ENCODE measurements at regions of chr6 and their contacts with region 1.

Region 1: GRCh38 chr6:506508-506907 is 115.0 kb downstream of the IRF4 start:
- DNase-seq: peak; percentile 86
- ATAC-seq: peak; percentile 69
- H3K4me3 Mint-ChIP-seq: peak overlapping the region; percentile 50
- H3K27ac Mint-ChIP-seq: peak overlapping the region; percentile 99
- H3K4me1 Mint-ChIP-seq: peaks cover 97% of the 10 kb centered on the region
- H3K27me3 Mint-ChIP-seq: no peaks in the 10 kb centered on the region
- CTCF ChIP-seq: no peak

Region 2: DNA sequence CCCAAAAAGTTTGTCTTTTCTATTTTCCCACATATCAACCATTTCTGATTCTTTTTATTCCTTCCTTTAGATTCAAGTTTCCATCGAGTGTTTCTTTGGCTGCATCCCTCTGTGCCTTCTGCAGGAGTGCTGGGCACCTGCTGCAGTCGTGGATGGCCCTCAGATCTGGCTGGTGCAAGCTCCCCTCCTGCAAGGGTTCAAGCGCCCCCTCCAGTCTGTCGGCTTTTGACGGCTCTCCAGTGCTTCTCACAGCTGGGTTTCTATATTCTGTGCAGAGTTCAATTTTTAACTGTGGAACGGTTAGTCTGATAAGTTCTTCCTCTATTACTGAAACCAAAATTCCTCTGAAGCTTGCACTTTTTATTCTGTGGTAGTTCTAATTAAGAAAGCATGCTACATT is 18.3 kb after region 1 on chr6:
- CTCF ChIA-PET with region 1: no interaction called
- POLR2A ChIA-PET with region 1: no interaction called
- intact Hi-C with region 1: no loop called
- DNase-seq: peak; percentile 67
- ATAC-seq: peak; percentile 77
- H3K4me3 Mint-ChIP-seq: no peak overlapping the region
- H3K27ac Mint-ChIP-seq: peak overlapping the region; percentile 76
- H3K4me1 Mint-ChIP-seq: peaks cover 25% of the 10 kb centered on the region
- H3K27me3 Mint-ChIP-seq: no peaks in the 10 kb centered on the region
- CTCF ChIP-seq: no peak

Region 3: GRCh38 chr6:551405-551804 is 44.9 kb after region 1 on chr6:
- CTCF ChIA-PET with region 1: interaction called, 3 read pairs
- POLR2A ChIA-PET with region 1: interaction called, 3 read pairs
- intact Hi-C with region 1: loop called (anchors 5 kb)
- DNase-seq: peak; percentile 77
- ATAC-seq: peak; percentile 87
- H3K4me3 Mint-ChIP-seq: no peak overlapping the region
- H3K27ac Mint-ChIP-seq: peak overlapping the region; percentile 80
- H3K4me1 Mint-ChIP-seq: peaks cover 57% of the 10 kb centered on the region
- H3K27me3 Mint-ChIP-seq: no peaks in the 10 kb centered on the region
- CTCF ChIP-seq: no peak

Measured in activated CD8-positive, alpha-beta T cell treated with anti-CD3 and anti-CD28 coated beads for 36 hours (primary cell).